ENCODE measurements at regions of chr16 and their contacts with region 1.

Region 1: GRCh38 chr16:50747207-50747956 is 5.5 kb downstream of the CYLD start:
- DNase-seq: peak; percentile 25
- ATAC-seq: peak; percentile 66
- H3K4me3 Mint-ChIP-seq: peak overlapping the region; percentile 69
- H3K27ac Mint-ChIP-seq: peak overlapping the region; percentile 98
- H3K4me1 Mint-ChIP-seq: peaks cover 61% of the 10 kb centered on the region
- H3K27me3 Mint-ChIP-seq: no peaks in the 10 kb centered on the region
- CTCF ChIP-seq: peak; percentile 79

Region 2: DNA sequence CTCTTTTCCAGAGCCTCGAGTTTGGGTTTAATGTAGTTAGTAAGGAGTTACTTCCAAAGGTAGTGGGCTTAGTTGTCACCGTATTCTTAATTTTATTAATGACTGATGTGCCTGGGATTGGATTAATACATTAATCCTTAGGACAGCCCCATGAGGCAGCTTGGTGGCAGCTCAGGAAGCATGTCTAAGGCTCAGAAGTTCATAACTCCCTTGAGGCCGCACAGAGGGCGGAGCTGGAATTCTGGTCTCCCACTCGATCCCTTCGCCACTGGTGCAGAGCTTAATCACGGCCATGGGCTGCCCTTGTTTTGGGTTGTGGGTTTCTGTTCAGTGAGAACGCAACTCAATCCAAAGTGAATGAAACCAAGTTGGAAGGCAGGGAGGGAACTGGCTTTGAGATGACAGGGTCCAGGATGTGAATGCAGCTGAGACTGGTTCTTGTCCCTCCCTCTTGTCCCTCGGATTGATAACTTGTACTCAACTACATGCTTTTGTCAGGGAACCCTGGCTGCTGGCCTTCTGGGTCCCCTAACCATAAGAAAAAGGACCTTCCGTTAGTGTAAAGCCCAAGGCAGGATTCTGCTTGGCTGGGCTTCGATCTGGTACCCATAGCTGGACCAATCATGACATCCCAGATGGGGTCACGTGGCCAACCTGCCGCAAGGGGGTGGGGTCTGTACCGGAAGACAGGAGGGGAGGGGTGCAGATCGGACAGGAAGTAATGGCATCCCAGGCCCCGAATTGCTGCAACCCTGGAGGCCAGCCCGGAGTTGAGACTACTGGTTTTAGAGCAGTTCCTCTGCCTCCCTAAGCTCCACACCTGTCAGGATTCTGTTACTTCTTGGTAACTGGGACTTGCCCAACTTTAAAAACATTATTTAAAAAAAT is 111.6 kb before region 1 on chr16:
- CTCF ChIA-PET with region 1: no interaction called
- POLR2A ChIA-PET with region 1: no interaction called
- intact Hi-C with region 1: no loop called
- DNase-seq: peak; percentile 60
- ATAC-seq: peak; percentile 79
- H3K4me3 Mint-ChIP-seq: no peak overlapping the region
- H3K27ac Mint-ChIP-seq: no peak overlapping the region
- H3K4me1 Mint-ChIP-seq: peaks cover 2% of the 10 kb centered on the region
- H3K27me3 Mint-ChIP-seq: no peaks in the 10 kb centered on the region
- CTCF ChIP-seq: no peak

Region 3: DNA sequence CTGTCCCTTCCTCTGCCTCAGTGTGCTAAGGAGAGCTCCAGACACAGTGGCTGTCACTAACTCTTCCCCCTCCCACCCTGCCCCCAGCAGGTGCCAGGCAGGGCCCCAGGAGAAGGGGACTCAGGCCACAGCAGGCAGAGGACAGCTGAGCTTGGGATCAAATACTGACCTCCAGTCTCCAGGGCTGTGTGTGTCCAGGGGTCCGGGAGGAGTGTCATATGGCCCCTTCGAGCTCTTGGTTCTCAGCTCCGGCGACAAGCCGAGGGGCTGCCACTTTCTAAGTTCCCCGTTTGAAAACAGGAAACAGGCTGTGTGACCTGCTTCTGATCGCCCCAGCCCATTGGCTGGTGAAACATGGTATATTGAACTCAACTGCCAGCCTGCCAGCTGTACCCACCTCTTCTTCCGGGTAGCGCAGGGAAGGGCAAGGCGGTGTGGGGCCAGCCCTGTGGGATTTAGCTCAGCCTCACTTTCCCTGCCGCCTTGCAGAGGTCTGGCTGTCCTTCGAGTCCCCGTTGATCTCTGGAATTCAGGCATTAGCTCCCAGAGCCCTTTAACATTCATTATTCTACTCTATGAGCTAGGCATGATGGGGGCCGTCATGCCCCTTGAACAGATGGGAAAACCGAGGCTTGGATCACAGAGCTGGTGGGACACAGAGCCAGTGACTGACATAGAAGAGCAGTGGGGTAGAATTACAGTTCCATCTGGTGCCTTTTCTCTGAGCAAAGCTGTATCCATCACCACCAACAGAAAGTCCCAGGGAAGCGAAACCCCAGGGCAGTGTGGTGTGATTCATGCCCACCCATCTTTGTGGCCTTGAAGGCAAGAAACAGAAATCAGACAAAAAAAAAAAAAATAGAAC is 66.1 kb before region 1 on chr16 and contains the start of gene SNX20:
- CTCF ChIA-PET with region 1: interaction called, 340 read pairs
- POLR2A ChIA-PET with region 1: interaction called, 22 read pairs
- intact Hi-C with region 1: loop called (anchors 5 kb)
- DNase-seq: peak; percentile 81
- ATAC-seq: peak; percentile 83
- H3K4me3 Mint-ChIP-seq: peak within 1 kb of the TSS; percentile 78
- H3K27ac Mint-ChIP-seq: peak within 1 kb of the TSS; percentile 93
- H3K4me1 Mint-ChIP-seq: peaks cover 79% of the 10 kb centered on the region
- H3K27me3 Mint-ChIP-seq: no peaks in the 10 kb centered on the region
- CTCF ChIP-seq: no peak
- total RNA-seq, gene SNX20: 24.6 to 25.0 TPM

Region 4: GRCh38 chr16:50844840-50845239 is 97.5 kb after region 1 on chr16:
- CTCF ChIA-PET with region 1: no interaction called
- POLR2A ChIA-PET with region 1: no interaction called
- intact Hi-C with region 1: no loop called
- DNase-seq: no peak
- ATAC-seq: no peak
- H3K4me3 Mint-ChIP-seq: no peak overlapping the region
- H3K27ac Mint-ChIP-seq: no peak overlapping the region
- H3K4me1 Mint-ChIP-seq: peaks cover 18% of the 10 kb centered on the region
- H3K27me3 Mint-ChIP-seq: peaks cover 9% of the 10 kb centered on the region
- CTCF ChIP-seq: no peak

Region 5: GRCh38 chr16:50884066-50884860 is 136.9 kb after region 1 on chr16:
- CTCF ChIA-PET with region 1: no interaction called
- POLR2A ChIA-PET with region 1: no interaction called
- intact Hi-C with region 1: no loop called
- DNase-seq: peak; percentile 40
- ATAC-seq: no peak
- H3K4me3 Mint-ChIP-seq: no peak overlapping the region
- H3K27ac Mint-ChIP-seq: no peak overlapping the region
- H3K4me1 Mint-ChIP-seq: no peaks in the 10 kb centered on the region
- H3K27me3 Mint-ChIP-seq: peaks cover 8% of the 10 kb centered on the region
- CTCF ChIP-seq: peak; percentile 19